ENCODE measurements at regions of chr1 and their contacts with region 1.

Region 1: DNA sequence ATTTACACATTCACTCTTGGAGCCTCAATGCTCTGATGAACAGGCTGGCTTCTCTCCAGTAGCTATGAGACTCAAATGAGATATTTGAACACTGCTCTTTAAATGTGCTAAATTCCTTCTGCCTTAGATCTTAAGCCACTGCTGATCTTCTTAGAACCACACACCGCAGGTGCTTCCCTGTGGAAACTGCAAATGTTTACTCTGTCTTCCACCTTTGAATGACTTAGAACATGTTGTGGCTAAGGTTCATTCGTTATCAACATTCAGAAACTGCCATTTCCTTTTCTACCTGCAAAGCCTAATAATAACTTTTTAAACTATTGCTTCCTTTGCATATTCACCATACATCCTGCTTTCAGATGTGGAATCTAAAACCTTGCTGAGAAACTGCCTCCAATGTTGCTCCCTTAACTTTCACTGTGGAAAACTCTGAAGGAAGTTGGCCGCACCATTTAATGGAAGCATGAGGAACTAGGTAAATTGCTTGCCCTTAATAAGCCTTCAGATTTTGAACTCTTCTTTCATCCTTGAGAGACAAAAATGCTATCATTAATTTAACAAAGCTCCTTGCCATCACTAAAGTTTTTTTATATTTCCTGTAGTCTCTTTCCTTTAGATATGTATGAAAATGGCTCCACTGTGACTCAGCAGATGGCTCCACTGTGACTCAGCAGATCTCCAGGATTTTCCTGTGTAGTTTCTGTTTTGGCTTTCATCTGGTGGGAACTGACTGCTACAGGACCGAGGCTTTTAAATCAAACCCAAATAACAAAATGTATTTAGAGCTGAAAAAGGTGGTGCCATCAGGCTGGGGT is 143.8 kb downstream of the TNFSF18 start:
- DNase-seq: peak in 7 of 9 donors; percentile 19 to 58 (median 40)
- ATAC-seq: peak; percentile 77
- H3K4me3 ChIP-seq: no peak overlapping the region
- H3K4me3 Mint-ChIP-seq: peak overlapping the region in 9 of 10 donors; percentile 4 to 75 (median 50)
- H3K27ac ChIP-seq: no peak overlapping the region
- H3K27ac Mint-ChIP-seq: peak overlapping the region; percentile 26 to 83 (median 59)
- H3K4me1 ChIP-seq: peaks cover 10 to 15% of the 10 kb centered on the region in 2 donors
- H3K4me1 Mint-ChIP-seq: peaks cover 15 to 41% (median 26%) of the 10 kb centered on the region in 7 donors
- H3K27me3 ChIP-seq: no peaks in the 10 kb centered on the region
- H3K27me3 Mint-ChIP-seq: peaks cover 0 to 21% (median 0%) of the 10 kb centered on the region in 5 donors

Region 2: GRCh38 chr1:172870901-172871606 is 35.9 kb before region 1 on chr1:
- CTCF ChIA-PET with region 1: interaction called, 3 read pairs
- POLR2A ChIA-PET with region 1: no interaction called
- intact Hi-C with region 1: loop called in 1 of 2 experiments (anchors 5 kb)
- DNase-seq: no peak
- ATAC-seq: no peak
- H3K4me3 ChIP-seq: no peak overlapping the region
- H3K4me3 Mint-ChIP-seq: no peak overlapping the region
- H3K27ac ChIP-seq: no peak overlapping the region
- H3K27ac Mint-ChIP-seq: no peak overlapping the region
- H3K4me1 ChIP-seq: peaks cover 0 to 9% of the 10 kb centered on the region in 2 donors
- H3K4me1 Mint-ChIP-seq: peaks cover 5 to 36% (median 26%) of the 10 kb centered on the region in 7 donors
- H3K27me3 ChIP-seq: no peaks in the 10 kb centered on the region
- H3K27me3 Mint-ChIP-seq: peaks cover 0 to 44% (median 0%) of the 10 kb centered on the region in 5 donors